Uterus (tissue), 4 donors: ENCODE measurements at regions of chr17 and their contacts with region 1.

Region 1: GRCh38 chr17:50783193-50783660 is 15.9 kb upstream of the ANKRD40CL start:
- DNase-seq: peak; percentile 78 to 82
- H3K4me3 ChIP-seq: no peak overlapping the region
- H3K27ac ChIP-seq: no peak overlapping the region
- H3K4me1 ChIP-seq: no peaks in the 10 kb centered on the region
- H3K27me3 ChIP-seq: no peaks in the 10 kb centered on the region
- CTCF ChIP-seq: peak; percentile 94 to 99 (median 98)
- POLR2A ChIP-seq: peak in 1 of 2 donors; percentile 14

Region 2: GRCh38 chr17:50689251-50689650 is 94.0 kb before region 1 on chr17:
- intact Hi-C with region 1: no loop called
- DNase-seq: no peak
- H3K4me3 ChIP-seq: no peak overlapping the region
- H3K27ac ChIP-seq: no peak overlapping the region
- H3K4me1 ChIP-seq: peaks cover 5 to 22% of the 10 kb centered on the region in 2 donors
- H3K27me3 ChIP-seq: no peaks in the 10 kb centered on the region
- CTCF ChIP-seq: no peak
- POLR2A ChIP-seq: no peak

Region 3: GRCh38 chr17:50841949-50842354 is 58.7 kb after region 1 on chr17:
- intact Hi-C with region 1: loop called (anchors 10 kb)
- DNase-seq: peak; percentile 69 to 75
- H3K4me3 ChIP-seq: no peak overlapping the region
- H3K27ac ChIP-seq: no peak overlapping the region
- H3K4me1 ChIP-seq: no peaks in the 10 kb centered on the region
- H3K27me3 ChIP-seq: no peaks in the 10 kb centered on the region
- CTCF ChIP-seq: peak; percentile 72 to 89 (median 84)
- POLR2A ChIP-seq: no peak

Region 4: GRCh38 chr17:50967795-50968194 is 184.6 kb after region 1 on chr17:
- intact Hi-C with region 1: no loop called
- DNase-seq: no peak
- H3K4me3 ChIP-seq: no peak overlapping the region
- H3K27ac ChIP-seq: peak overlapping the region; percentile 50 to 63
- H3K4me1 ChIP-seq: no peaks in the 10 kb centered on the region
- H3K27me3 ChIP-seq: no peaks in the 10 kb centered on the region
- CTCF ChIP-seq: no peak
- POLR2A ChIP-seq: no peak